IMR-90 (cell line): ENCODE measurements at regions of chr5 and their contacts with region 1.

Region 1: GRCh38 chr5:1763548-1763911 is 36.1 kb downstream of the MRPL36 start:
- DNase-seq: peak; percentile 72
- ATAC-seq: peak; percentile 92
- H3K4me3 ChIP-seq: no peak overlapping the region
- H3K27ac ChIP-seq: no peak overlapping the region
- H3K4me1 ChIP-seq: peaks cover 5% of the 10 kb centered on the region; the same call in 1 of the 2 replicates
- H3K27me3 ChIP-seq: peaks cover 7% of the 10 kb centered on the region; the same call in 1 of the 2 replicates
- CTCF ChIP-seq: peak; percentile 97
- POLR2A ChIP-seq: 0 out of 2 replicates have a peak, but pooled peaks have one; percentile 32
- RAD21 ChIP-seq: peak; percentile 96

Region 2: DNA sequence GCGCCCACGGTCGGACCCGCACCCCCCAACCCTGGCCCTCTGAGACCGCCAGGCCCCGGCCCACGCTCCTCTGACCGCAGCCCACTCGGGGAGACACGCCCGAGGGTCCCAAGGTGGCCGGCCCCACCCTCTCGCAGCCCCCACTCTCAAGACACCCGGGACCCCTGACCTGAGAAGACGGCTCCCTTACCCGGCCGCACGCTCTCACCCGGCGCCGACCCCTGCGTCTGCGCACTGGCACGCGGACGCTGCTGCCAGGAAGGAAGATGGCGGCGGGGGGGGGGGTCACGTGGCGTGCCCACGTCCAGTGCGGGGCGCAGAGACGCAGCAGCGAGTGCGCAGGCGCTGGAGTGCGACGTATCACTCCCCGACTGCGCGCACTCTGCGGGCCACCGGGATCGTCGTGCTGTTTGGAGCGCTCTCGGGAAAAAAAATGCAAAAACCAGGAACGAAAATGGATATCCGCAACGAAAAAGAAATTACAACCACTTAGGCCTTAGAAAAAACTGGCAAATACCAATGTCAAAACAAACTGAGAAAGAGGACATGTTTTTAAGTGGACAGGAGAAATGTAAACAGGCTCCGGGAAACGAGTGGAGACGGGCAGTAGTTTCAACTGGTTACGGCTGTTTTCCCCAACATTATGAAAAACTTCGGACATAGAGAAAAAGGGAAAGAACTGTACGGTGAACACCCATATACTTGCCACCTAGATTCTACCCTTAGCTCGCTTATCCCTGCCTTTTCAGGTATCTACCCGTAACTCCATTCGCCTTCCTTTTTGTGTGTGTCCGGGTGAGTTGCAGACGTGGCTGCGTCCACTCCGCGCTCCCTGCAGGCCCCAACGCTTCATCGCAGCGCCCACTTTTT is 36.3 kb after region 1 on chr5 and contains the start of gene MRPL36:
- CTCF ChIA-PET with region 1: interaction called, 8 read pairs
- POLR2A ChIA-PET with region 1: no interaction called
- dilution Hi-C with region 1: no loop called
- in situ Hi-C with region 1: no loop called
- intact Hi-C with region 1: loop called (anchors 2 kb)
- DNase-seq: peak; percentile 85
- ATAC-seq: peak; percentile 82
- H3K4me3 ChIP-seq: peak within 1 kb of the TSS; percentile 98
- H3K27ac ChIP-seq: peak within 1 kb of the TSS; percentile 84
- H3K4me1 ChIP-seq: peaks cover 14% of the 10 kb centered on the region
- H3K27me3 ChIP-seq: no peaks in the 10 kb centered on the region
- CTCF ChIP-seq: no peak
- POLR2A ChIP-seq: peak; percentile 49; the same call in 1 of the 2 replicates
- RAD21 ChIP-seq: no peak
- total RNA-seq, gene MRPL36: 63.9 and 85.9 TPM in 2 replicates

Region 3: DNA sequence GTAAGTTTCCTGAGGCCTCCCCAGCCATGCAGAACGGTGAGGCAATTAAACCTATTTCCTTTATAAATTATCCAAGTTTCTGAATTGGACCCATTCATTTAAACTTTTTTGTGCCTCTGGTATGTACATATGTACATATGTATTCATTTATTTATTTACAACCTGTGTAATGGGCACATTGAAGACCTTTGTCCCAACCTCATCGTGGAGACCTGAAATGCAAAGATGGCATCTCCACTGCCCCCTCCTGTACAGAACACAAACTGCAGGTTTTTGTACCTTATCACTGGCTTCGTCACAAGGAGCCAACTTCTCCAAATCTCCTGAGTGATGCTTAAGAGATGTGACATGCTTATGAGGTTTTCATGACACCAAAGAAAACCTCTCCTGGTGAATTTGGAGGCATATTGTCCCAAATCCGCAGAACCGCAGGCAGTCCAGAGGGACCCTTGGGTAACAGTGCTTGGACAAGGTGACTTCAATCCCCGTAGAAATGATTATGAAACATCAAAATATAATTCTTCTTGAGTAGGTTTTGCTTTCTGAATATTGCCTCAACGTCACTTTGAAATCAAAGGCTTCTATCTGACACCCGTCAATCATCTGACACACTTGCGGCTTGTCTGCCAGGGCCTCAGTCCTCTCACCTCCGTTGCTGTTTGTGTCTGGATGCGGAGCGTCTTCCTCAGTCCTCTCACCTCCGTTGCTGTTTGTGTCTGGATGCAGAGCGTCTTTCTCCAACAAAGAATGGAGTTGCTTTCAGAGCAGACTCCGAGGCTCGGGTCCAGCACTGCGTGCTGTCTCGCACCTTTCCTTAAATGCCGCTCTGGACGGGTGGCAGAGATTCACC is 254.2 kb after region 1 on chr5:
- CTCF ChIA-PET with region 1: no interaction called
- POLR2A ChIA-PET with region 1: no interaction called
- dilution Hi-C with region 1: no loop called
- in situ Hi-C with region 1: no loop called
- intact Hi-C with region 1: loop called (anchors 1 kb)
- DNase-seq: peak; percentile 10
- ATAC-seq: no peak
- H3K4me3 ChIP-seq: no peak overlapping the region
- H3K27ac ChIP-seq: no peak overlapping the region
- H3K4me1 ChIP-seq: no peaks in the 10 kb centered on the region
- H3K27me3 ChIP-seq: no peaks in the 10 kb centered on the region
- CTCF ChIP-seq: peak; percentile 37
- POLR2A ChIP-seq: no peak
- RAD21 ChIP-seq: peak; percentile 40

Region 4: GRCh38 chr5:2038321-2039179 is 275.0 kb after region 1 on chr5:
- CTCF ChIA-PET with region 1: interaction called, 8 read pairs
- POLR2A ChIA-PET with region 1: no interaction called
- dilution Hi-C with region 1: no loop called
- in situ Hi-C with region 1: loop called (anchors 5 kb)
- intact Hi-C with region 1: loop called (anchors 1 kb)
- DNase-seq: peak; percentile 3
- ATAC-seq: peak; percentile 99
- H3K4me3 ChIP-seq: no peak overlapping the region
- H3K27ac ChIP-seq: no peak overlapping the region
- H3K4me1 ChIP-seq: peaks cover 2% of the 10 kb centered on the region; the same call in 1 of the 2 replicates
- H3K27me3 ChIP-seq: no peaks in the 10 kb centered on the region
- CTCF ChIP-seq: peak; percentile 59
- POLR2A ChIP-seq: no peak
- RAD21 ChIP-seq: peak; percentile 42

Region 5: DNA sequence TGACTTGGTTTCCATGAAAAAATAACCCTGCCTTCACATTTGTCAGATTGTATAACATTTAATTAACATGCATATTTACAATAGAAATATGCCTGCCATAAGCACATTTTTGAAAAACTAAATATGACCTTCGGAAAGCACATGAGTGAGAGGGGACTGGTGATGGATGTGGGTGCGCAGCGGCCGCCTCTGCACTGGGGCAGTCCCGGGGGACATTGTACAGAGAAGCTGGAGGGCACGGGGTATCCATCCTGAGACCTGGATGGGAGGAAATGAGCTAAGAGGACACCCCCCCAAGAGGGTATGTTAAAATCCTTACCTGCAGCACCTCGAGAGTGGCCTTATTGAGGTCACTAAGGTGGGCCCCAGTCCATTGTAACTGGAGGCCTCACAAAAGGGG is 280.5 kb after region 1 on chr5:
- CTCF ChIA-PET with region 1: interaction called, 8 read pairs
- POLR2A ChIA-PET with region 1: no interaction called
- dilution Hi-C with region 1: no loop called
- in situ Hi-C with region 1: loop called (anchors 5 kb)
- intact Hi-C with region 1: no loop called
- DNase-seq: no peak
- ATAC-seq: no peak
- H3K4me3 ChIP-seq: no peak overlapping the region
- H3K27ac ChIP-seq: no peak overlapping the region
- H3K4me1 ChIP-seq: no peaks in the 10 kb centered on the region
- H3K27me3 ChIP-seq: no peaks in the 10 kb centered on the region
- CTCF ChIP-seq: no peak
- POLR2A ChIP-seq: no peak
- RAD21 ChIP-seq: no peak

Region 6: GRCh38 chr5:3602785-3603502 is 1839.4 kb after region 1 on chr5:
- CTCF ChIA-PET with region 1: no interaction called
- POLR2A ChIA-PET with region 1: no interaction called
- dilution Hi-C with region 1: no loop called
- in situ Hi-C with region 1: no loop called
- intact Hi-C with region 1: loop called (anchors 5 kb)
- DNase-seq: no peak
- ATAC-seq: peak; percentile 53
- H3K4me3 ChIP-seq: no peak overlapping the region
- H3K27ac ChIP-seq: no peak overlapping the region
- H3K4me1 ChIP-seq: no peaks in the 10 kb centered on the region
- H3K27me3 ChIP-seq: peaks cover 39% of the 10 kb centered on the region
- CTCF ChIP-seq: 0 out of 2 replicates have a peak, but pooled peaks have one; percentile 25
- POLR2A ChIP-seq: no peak
- RAD21 ChIP-seq: peak; percentile 23; the same call in 1 of the 2 replicates